Endothelial cell of umbilical vein (primary cell): ENCODE measurements at regions of chr4 and their contacts with region 1.

Region 1: DNA sequence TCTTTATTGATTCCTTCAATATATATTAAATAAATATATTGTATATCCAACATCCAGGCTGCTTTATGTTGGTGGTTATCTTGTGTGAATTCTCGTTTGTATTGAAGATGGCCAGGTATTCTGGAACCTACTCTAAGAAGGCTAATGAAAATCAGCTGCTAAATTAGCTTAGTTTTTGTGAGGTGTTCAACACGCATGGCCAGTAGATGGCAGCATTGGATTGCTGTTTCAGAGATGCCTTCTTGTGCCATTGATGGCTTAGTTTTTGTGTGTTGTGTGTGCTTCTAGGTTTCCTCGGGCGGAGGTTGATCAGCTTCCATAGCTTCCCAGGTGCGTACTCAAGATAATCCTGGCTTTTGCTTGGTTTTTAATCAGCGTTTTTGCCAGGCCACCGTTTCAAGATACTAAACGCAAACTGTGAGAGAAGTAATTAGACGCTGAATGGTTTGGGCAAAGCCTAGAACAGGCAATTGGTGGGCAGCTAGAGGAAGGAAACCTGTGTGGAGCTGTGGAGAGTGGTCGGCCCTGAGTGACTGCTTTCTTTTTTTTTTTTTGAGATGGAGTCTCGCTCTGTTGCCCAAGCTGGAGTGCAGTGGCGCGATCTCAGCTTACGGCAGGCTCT is 15.1 kb downstream of the NOCT start:
- DNase-seq: peak; percentile 84
- H3K4me3 ChIP-seq: no peak overlapping the region
- H3K27ac ChIP-seq: no peak overlapping the region
- H3K4me1 ChIP-seq: no peaks in the 10 kb centered on the region
- H3K27me3 ChIP-seq: no peaks in the 10 kb centered on the region
- CTCF ChIP-seq: peak; percentile 74 to 76
- POLR2A ChIP-seq: no peak

Region 2: GRCh38 chr4:139042981-139043460 is 12.3 kb after region 1 on chr4:
- CTCF ChIA-PET with region 1: interaction called, 140 read pairs
- POLR2A ChIA-PET with region 1: interaction called, 4 read pairs
- dilution Hi-C with region 1: no loop called
- intact Hi-C with region 1: no loop called
- DNase-seq: peak; percentile 91
- H3K4me3 ChIP-seq: no peak overlapping the region
- H3K27ac ChIP-seq: no peak overlapping the region
- H3K4me1 ChIP-seq: peaks cover 26% of the 10 kb centered on the region
- H3K27me3 ChIP-seq: no peaks in the 10 kb centered on the region
- CTCF ChIP-seq: no peak
- POLR2A ChIP-seq: no peak

Region 3: DNA sequence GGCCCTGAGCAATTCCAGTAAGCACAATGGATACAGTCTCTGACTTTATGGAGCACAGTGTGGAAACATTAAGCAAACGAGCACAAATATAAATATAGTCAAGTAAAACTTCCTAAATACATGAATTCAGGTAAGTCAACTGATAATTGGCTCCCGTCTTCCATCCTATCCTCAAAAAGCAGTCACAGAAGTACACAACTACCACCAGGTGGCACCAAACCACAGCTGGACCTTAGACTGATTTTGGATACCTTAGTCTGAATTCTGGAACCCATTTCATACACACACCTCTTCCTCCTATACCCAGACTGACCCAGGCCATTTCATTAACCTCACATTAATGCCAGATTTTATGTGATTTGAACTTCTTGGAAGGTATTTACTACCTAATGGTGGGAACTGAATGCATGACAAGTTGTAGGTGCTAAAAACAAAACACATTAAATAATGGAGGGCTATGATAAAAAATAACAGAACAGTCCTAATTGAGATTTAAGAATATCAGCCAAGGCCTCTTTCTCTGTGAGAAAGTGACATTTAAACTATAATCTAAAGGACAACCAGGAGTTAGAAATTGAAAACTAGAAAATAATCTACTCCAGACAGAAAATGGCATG is 68.7 kb after region 1 on chr4:
- CTCF ChIA-PET with region 1: interaction called, 59 read pairs
- POLR2A ChIA-PET with region 1: no interaction called
- dilution Hi-C with region 1: no loop called
- intact Hi-C with region 1: no loop called
- DNase-seq: peak; percentile 79
- H3K4me3 ChIP-seq: no peak overlapping the region
- H3K27ac ChIP-seq: no peak overlapping the region
- H3K4me1 ChIP-seq: no peaks in the 10 kb centered on the region
- H3K27me3 ChIP-seq: no peaks in the 10 kb centered on the region
- CTCF ChIP-seq: peak; percentile 76 to 77
- POLR2A ChIP-seq: no peak

Region 4: GRCh38 chr4:139219450-139220055 is 188.8 kb after region 1 on chr4:
- CTCF ChIA-PET with region 1: interaction called, 10 read pairs
- POLR2A ChIA-PET with region 1: no interaction called
- dilution Hi-C with region 1: no loop called
- intact Hi-C with region 1: no loop called
- DNase-seq: no peak
- H3K4me3 ChIP-seq: no peak overlapping the region
- H3K27ac ChIP-seq: no peak overlapping the region
- H3K4me1 ChIP-seq: no peaks in the 10 kb centered on the region
- H3K27me3 ChIP-seq: no peaks in the 10 kb centered on the region
- CTCF ChIP-seq: no peak
- POLR2A ChIP-seq: no peak

Region 5: DNA sequence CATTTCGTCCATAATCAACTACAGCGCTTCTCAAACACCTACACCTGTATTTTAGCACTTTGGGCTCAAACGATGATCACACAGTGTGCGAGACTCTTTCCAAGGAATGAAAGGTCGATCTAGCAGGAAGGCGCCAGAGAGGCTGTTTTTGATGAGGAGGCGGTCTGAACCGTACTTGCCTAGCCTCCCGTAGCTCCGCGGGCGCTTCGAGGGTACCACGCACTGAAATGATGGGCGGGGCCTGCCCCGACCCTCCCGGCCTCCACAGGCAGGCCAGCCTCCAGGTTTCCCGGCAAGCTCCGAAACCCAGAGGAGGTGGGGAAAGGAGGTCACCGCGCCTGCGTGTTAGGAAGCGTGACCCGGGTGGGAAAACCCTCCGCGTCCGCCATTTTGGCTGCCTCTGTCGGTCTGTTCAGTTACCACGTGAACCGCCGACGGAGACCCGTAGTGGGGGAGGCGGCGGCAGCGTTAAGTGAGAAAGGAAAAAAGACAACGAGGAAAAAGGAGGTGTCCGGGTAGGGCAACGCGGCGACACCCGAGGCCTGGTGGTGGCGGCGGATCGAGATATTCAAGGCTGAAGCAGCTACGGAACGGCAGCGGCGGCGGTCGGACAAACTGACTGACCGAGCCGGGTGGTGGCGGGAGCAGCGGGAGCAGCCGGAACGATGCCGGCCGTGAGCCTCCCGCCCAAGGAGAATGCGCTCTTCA is 270.5 kb after region 1 on chr4 and contains the start of gene NAA15:
- CTCF ChIA-PET with region 1: interaction called, 88 read pairs
- POLR2A ChIA-PET with region 1: no interaction called
- dilution Hi-C with region 1: no loop called
- intact Hi-C with region 1: no loop called
- DNase-seq: peak; percentile 99
- H3K4me3 ChIP-seq: peak within 1 kb of the TSS; percentile 69 to 99 (median 85)
- H3K27ac ChIP-seq: peak within 1 kb of the TSS; percentile 88
- H3K4me1 ChIP-seq: peaks cover 20% of the 10 kb centered on the region
- H3K27me3 ChIP-seq: no peaks in the 10 kb centered on the region
- CTCF ChIP-seq: no peak
- POLR2A ChIP-seq: peak; percentile 28
- total RNA-seq, gene NAA15: 57.0 and 67.9 TPM in 2 replicates

Region 6: DNA sequence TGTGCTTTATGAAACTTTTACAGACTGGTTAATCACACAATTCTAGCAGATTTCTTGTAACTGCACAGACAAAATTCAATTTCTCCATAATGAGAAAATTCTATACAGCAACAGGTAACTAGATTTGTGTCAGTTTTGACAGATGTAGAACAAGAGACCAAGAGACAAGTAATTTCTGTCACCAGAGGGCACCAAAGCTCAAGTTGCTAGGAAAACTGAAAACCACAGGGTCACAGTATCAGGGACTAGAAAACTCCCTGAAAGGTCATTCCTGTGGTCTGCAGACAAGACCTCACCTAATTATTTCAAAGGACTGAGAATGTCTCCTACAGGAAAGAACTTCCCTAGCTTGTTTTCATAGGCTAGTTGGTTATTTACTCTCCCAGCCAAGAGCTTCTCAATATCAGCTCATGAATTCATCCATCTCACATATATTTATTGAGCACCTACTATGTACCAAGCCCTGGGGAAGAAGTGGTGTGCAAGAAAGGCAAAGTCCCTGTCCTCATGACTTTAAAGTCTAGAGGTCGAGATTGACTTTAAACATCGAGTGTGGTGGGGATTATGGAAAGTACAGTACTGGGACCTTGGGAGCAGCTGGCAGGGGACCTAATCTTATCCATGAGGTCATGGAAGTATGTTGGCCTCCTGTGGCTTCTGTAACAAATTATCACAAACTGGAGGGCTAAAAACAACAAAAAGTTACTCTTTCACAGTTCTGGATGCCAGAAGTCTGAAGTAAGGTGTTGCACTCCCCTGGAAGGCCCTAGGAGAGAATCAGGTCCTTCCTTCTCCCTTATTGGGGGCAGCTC is 573.1 kb after region 1 on chr4:
- CTCF ChIA-PET with region 1: interaction called, 12 read pairs
- POLR2A ChIA-PET with region 1: no interaction called
- dilution Hi-C with region 1: no loop called
- intact Hi-C with region 1: no loop called
- DNase-seq: peak; percentile 61
- H3K4me3 ChIP-seq: no peak overlapping the region
- H3K27ac ChIP-seq: no peak overlapping the region
- H3K4me1 ChIP-seq: peaks cover 3% of the 10 kb centered on the region
- H3K27me3 ChIP-seq: no peaks in the 10 kb centered on the region
- CTCF ChIP-seq: peak; percentile 38 to 55
- POLR2A ChIP-seq: no peak

Region 7: GRCh38 chr4:140004549-140004895 is 973.8 kb after region 1 on chr4:
- CTCF ChIA-PET with region 1: no interaction called
- POLR2A ChIA-PET with region 1: no interaction called
- dilution Hi-C with region 1: no loop called
- intact Hi-C with region 1: no loop called
- DNase-seq: peak; percentile 74
- H3K4me3 ChIP-seq: peak overlapping the region in 2 of 3 experiments; percentile 7 to 34
- H3K27ac ChIP-seq: no peak overlapping the region
- H3K4me1 ChIP-seq: peaks cover 7% of the 10 kb centered on the region
- H3K27me3 ChIP-seq: no peaks in the 10 kb centered on the region
- CTCF ChIP-seq: no peak
- POLR2A ChIP-seq: no peak